ENCODE measurements at regions of chr2 and their contacts with region 1.

Region 1: DNA sequence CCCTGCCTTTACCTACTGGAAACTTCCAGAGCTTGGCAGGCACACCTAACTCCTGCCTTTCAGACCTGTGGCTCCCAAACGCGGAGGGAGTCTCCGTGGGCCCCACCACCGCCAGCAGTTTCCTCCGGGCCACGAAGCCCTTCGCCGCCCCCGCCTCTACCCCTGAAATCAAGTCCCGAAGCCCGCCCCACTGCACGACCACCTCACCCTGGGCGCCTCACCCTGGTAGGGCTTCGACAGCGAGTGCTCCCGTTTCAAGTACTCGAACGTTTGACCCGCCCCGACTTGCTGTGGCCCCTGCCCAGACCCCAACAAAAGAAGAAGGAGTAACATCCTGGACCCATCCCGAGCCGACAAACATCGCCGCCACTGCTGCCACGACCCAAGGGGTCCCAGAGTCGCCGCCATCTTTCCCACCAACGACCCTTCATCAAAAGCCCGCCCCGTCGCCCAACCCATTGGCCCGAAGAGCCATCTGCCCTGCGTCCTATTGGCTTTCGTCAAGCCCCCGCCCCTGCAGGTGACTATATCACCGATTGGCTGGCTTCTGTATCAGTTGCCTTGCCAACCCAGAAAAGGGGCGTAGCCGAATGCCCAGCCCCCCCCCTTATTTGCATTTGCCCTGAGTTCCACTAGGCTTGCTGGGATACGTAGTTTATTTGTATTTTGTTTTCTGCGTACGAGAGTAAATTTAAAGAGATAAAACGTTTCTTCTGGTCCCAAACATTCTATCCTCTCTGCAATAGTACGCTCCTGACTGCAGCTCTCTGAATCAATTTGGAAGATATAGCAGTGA is at the start of gene LMAN2L:
- DNase-seq: peak; percentile 93 to 100 (median 97)

Region 2: GRCh38 chr2:96638144-96639121 is 101.4 kb before region 1 on chr2 and contains the start of gene KANSL3:
- intact Hi-C with region 1: loop called (anchors 1 kb)
- DNase-seq: peak; percentile 84 to 98 (median 88)

Region 3: DNA sequence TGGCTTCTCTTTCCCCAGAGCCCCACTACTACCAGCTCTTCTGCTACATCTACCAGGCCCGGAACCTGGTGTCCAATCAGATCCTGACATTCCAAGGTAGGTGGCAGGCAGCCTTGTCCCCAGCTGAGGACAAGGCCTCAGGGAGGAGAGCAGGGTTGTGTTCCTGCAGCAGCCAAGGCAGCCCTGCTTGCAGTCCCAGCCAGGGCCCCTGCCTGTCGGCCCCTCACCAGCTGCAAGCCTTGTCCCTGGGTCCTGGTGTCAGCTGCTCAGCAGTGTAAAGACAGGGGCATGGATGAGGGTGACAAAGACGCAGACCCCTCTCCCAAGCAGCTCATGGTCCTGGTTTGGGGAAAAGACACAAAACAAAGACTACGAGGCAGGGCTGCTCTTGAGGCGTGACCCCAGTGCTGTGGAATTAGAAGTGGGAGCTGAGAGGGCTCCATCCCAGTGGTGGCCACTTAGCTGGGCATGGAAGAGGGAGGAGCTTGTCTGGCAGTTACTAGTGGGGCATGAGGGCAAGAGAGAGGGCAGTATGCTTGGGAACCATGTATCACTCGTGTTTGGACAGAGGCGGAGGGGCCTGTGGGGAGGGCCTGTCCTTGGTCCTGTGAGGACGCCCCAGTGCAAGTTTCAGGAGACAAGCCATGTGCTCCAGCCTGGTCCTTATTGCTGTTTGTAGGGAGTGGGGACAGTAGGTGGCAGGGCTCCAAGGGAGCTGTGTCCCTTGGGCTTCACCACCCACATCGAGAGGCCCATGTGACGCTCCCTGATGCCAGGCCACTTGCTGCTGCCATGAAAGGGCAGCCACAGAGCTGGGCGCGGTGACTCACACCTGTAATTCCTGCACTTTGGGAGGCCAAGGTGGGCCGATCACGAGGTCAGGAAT is 47.5 kb before region 1 on chr2:
- intact Hi-C with region 1: no loop called
- DNase-seq: peak in 1 of 10 donors; percentile 67

Region 4: GRCh38 chr2:96760036-96760985 is 20.5 kb after region 1 on chr2 and contains the start of gene CNNM4:
- intact Hi-C with region 1: loop called (anchors 1 kb)
- DNase-seq: peak; percentile 86 to 99 (median 94)

Region 5: DNA sequence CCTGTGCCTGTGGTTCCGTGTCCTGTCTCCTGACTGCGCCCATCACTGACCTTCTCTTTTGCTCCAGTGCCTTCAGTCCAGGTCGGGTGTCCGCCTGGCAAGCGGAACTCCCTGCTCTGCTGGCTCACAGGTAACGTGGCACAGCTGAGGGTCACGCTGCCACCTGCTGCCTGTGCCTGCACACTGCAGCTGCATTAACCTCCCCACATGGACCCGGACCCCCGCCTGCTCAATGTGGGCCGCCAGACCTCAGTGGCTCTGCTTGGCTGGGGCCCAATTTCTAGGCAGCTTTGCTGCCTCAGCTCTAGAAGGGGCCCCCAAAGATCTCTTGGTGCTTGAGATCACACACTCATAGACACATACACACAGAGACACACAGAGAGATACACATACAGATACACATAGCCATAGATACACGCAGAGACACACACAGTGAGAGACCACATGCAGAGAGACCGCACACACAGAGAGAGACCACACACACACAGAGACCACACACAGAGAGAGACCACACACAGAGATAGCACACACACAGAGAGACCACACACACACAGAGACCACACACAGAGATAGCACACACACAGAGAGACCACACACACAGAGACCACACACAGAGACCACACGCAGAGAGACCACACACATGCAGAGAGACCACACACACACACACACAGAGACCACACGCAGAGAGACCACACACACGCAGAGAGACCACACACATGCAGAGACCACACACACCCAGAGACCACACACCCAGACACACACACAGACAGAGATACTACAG is 61.4 kb after region 1 on chr2:
- intact Hi-C with region 1: loop called (anchors 5 kb)
- DNase-seq: peak; percentile 48 to 96 (median 72)

Region 6: DNA sequence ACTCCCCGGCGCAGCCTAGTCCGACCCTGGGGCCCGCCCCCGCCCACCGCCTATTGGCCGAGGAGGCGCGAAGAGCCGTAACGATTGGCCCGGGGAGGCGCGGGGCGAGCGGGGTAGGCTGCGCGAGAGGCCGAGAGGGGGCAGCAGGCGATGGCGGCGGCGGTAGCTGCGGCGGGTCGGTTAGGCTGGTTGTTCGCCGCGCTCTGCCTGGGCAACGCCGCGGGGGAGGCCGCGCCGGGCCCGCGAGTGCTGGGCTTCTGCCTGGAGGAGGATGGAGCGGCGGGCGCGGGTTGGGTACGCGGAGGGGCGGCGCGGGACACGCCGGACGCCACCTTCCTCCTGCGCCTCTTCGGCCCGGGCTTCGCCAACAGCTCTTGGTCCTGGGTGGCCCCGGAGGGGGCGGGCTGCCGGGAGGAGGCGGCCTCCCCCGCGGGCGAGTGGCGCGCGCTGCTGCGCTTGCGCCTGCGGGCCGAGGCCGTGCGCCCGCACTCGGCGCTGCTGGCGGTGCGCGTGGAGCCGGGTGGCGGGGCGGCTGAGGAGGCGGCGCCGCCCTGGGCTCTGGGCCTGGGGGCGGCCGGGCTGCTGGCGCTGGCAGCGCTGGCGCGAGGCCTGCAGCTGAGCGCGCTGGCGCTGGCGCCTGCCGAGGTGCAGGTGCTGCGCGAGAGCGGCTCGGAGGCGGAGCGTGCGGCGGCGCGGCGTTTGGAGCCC is 76.5 kb after region 1 on chr2 and contains the start of gene CNNM3:
- intact Hi-C with region 1: loop called (anchors 1 kb)
- DNase-seq: peak; percentile 93 to 100 (median 97)